ENCODE measurements at regions of chr4 and their contacts with region 1.

Region 1: GRCh38 chr4:54384563-54384962 is 155.5 kb downstream of the PDGFRA start:
- DNase-seq: peak in 8 of 10 donors; percentile 34 to 90 (median 61)

Region 2: GRCh38 chr4:54440394-54441136 is 56.0 kb after region 1 on chr4:
- intact Hi-C with region 1: loop called (anchors 2 kb)
- DNase-seq: peak in 4 of 10 donors; percentile 8 to 39 (median 20)

Region 3: GRCh38 chr4:54999003-54999402 is 614.4 kb after region 1 on chr4:
- intact Hi-C with region 1: no loop called
- DNase-seq: no peak

Region 4: GRCh38 chr4:55184600-55185523 is 800.3 kb after region 1 on chr4:
- intact Hi-C with region 1: no loop called
- DNase-seq: peak in 1 of 10 donors; percentile 52

Measured in posterior cingulate gyrus (tissue), 11 donors.